ENCODE measurements at regions of chr11 and their contacts with region 1.

Region 1: GRCh38 chr11:95150946-95151684 is 61.5 kb downstream of the ENDOD1 start:
- DNase-seq: peak; percentile 92
- ATAC-seq: peak; percentile 76
- H3K4me3 ChIP-seq: peak overlapping the region; percentile 63 to 66
- H3K27ac ChIP-seq: peak overlapping the region; percentile 90
- H3K4me1 ChIP-seq: peaks cover 32 to 55% of the 10 kb centered on the region in 2 experiments
- H3K27me3 ChIP-seq: no peaks in the 10 kb centered on the region
- CTCF ChIP-seq: peak; percentile 56 to 97 (median 76)
- POLR2A ChIP-seq: peak; percentile 47
- RAD21 ChIP-seq: peak; percentile 92

Region 2: DNA sequence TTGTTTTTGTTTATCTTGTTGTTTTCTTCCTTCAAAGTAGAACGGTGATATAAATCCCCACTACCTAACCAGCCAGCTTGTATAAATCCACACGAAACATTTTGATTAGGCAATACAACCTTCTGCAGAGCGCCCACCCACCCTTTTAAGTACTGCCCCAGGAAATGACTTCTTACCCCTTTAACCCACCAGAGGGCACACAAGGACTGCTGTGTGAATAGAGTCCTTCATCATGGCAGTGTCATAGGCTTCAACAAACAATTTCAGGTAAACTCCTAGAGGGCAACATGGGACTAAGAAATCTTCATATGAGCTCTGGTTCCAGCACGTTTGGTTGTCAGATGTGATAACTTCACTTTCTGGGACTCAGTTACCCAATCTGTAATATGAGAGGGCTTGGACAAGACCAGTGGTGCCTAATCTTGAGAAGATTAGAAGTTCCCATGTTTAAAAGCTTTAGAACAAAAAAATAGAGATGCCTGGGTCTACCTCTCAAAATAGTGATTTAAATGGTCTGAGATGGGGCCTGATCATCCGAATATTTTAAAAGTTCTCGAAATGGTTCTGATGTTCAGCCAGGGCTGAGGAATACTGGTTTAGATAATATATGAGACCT is 527.9 kb before region 1 on chr11:
- CTCF ChIA-PET with region 1: interaction called, 11 read pairs
- POLR2A ChIA-PET with region 1: no interaction called
- RAD21 ChIA-PET with region 1: no interaction called
- intact Hi-C with region 1: loop called (anchors 1 kb)
- DNase-seq: peak; percentile 88
- ATAC-seq: peak; percentile 99
- H3K4me3 ChIP-seq: no peak overlapping the region
- H3K27ac ChIP-seq: no peak overlapping the region
- H3K4me1 ChIP-seq: no peaks in the 10 kb centered on the region
- H3K27me3 ChIP-seq: no peaks in the 10 kb centered on the region
- CTCF ChIP-seq: peak; percentile 71 to 99 (median 90)
- POLR2A ChIP-seq: no peak
- RAD21 ChIP-seq: peak; percentile 99

Region 3: DNA sequence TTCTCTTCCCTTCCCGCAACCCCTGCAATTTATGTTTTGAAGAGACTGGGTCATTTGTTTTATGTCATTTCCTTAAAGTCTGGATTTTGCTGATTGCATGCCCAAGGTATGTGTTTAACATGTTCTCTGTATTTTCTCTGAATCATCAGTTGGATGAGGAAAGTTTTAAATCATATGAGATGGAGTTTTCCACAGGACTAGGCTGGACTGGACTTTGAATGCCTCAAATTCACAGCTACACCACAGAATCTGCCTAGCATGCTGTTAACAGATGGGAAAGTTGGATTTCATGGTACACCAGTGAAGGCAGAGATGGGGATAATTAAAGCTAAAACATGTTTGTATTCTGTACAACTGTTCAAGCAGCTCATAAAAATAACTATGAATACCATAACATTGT is 240.3 kb before region 1 on chr11:
- CTCF ChIA-PET with region 1: no interaction called
- POLR2A ChIA-PET with region 1: no interaction called
- RAD21 ChIA-PET with region 1: no interaction called
- intact Hi-C with region 1: no loop called
- DNase-seq: no peak
- ATAC-seq: no peak
- H3K4me3 ChIP-seq: no peak overlapping the region
- H3K27ac ChIP-seq: no peak overlapping the region
- H3K4me1 ChIP-seq: peaks cover 0 to 8% of the 10 kb centered on the region in 2 experiments; a peak in 1 of 4 replicates
- H3K27me3 ChIP-seq: no peaks in the 10 kb centered on the region
- CTCF ChIP-seq: no peak
- POLR2A ChIP-seq: no peak
- RAD21 ChIP-seq: no peak

Region 4: DNA sequence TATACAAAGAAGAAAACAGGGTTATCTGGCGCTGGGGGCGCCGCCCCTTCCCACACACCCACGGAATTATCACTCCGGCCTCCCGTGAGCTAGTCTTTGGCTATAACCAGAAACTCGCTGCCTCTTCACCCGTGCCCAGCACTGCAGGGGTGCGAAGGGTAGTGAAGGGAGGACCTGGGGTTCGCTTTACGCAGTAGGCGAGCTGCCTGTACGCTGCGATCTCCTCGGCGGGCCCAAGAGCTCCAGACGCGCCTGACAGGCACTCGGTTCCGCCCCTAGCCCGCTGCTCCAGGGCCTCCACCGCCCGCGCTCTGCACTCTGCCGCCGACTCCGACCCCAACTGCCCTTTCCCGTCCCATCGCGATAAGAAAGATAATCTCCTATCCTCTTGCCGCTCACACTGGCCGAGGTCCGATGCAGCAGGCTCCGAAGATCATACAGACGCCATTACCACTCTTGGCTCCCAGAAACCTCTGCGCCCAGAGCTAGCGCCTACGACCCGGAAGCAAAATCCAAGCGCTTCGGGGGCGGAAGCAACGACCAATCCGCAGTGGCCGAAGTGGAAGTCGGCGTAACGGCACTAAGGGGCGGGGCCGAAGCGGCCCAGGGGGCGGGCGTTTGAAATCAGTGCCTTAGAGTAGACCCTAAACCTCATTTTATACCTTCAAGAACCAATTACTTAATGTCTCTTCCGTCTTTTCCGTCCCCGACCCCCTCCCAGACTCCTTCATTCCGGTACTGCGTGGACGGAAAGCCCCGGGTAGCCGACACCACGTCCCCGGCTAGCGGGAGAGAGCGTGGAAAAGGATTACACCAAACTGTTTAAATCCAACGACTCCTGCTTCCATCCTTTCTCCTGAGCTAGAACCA is 177.8 kb before region 1 on chr11 and contains the starts of genes CWC15 and KDM4D:
- CTCF ChIA-PET with region 1: interaction called, 4 read pairs
- POLR2A ChIA-PET with region 1: no interaction called
- RAD21 ChIA-PET with region 1: no interaction called
- intact Hi-C with region 1: loop called (anchors 2 kb)
- DNase-seq: peak; percentile 84
- ATAC-seq: peak; percentile 99
- H3K4me3 ChIP-seq: peak within 1 kb of the TSS; percentile 75 to 82
- H3K27ac ChIP-seq: peak within 1 kb of the TSS; percentile 51
- H3K4me1 ChIP-seq: peaks cover 7 to 14% of the 10 kb centered on the region in 2 experiments; a peak in 3 of 4 replicates
- H3K27me3 ChIP-seq: no peaks in the 10 kb centered on the region
- CTCF ChIP-seq: no peak
- POLR2A ChIP-seq: peak; percentile 88
- RAD21 ChIP-seq: no peak
- total RNA-seq, gene CWC15: 47.6 TPM
- total RNA-seq, gene KDM4D: 2.1 TPM

Region 5: DNA sequence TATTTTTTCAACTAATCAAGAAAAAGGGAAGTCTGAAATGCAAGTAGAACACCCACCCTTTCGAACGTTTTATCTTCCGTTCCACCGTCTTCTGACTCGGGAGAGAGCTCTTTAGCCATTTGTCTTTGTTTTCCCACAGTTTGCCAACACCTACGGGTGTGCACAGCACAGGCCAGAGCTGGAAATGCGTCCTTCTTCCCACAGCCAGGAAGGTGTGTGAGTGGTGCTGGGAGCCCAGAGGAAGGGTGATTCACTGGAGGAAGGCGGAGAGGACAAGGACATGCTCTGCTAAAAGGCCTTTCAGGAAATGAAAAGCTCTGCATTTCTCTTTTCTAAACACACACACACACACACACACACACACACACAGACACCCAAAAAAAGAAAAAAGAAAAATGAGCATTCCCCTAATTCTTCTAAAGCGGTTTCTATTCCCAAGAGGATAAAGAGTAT is 42.9 kb before region 1 on chr11:
- CTCF ChIA-PET with region 1: interaction called, 5 read pairs
- POLR2A ChIA-PET with region 1: interaction called, 5 read pairs
- RAD21 ChIA-PET with region 1: interaction called in 1 of 2 experiments, 3 read pairs
- intact Hi-C with region 1: loop called (anchors 1 kb)
- DNase-seq: no peak
- ATAC-seq: peak; percentile 74
- H3K4me3 ChIP-seq: peak overlapping the region; percentile 43 to 55
- H3K27ac ChIP-seq: peak overlapping the region; percentile 89
- H3K4me1 ChIP-seq: peaks cover 64 to 87% of the 10 kb centered on the region in 2 experiments
- H3K27me3 ChIP-seq: no peaks in the 10 kb centered on the region
- CTCF ChIP-seq: no peak
- POLR2A ChIP-seq: no peak
- RAD21 ChIP-seq: no peak

Region 6: GRCh38 chr11:95764267-95764898 is 613.3 kb after region 1 on chr11:
- CTCF ChIA-PET with region 1: interaction called, 83 read pairs
- POLR2A ChIA-PET with region 1: interaction called, 3 read pairs
- RAD21 ChIA-PET with region 1: interaction called in 1 of 2 experiments, 4 read pairs
- intact Hi-C with region 1: loop called (anchors 1 kb)
- DNase-seq: peak; percentile 27
- ATAC-seq: peak; percentile 72; the same call in 1 of the 2 replicates
- H3K4me3 ChIP-seq: no peak overlapping the region
- H3K27ac ChIP-seq: no peak overlapping the region
- H3K4me1 ChIP-seq: no peaks in the 10 kb centered on the region
- H3K27me3 ChIP-seq: no peaks in the 10 kb centered on the region
- CTCF ChIP-seq: peak; percentile 42 to 79 (median 66); a peak in 5 of 6 replicates
- POLR2A ChIP-seq: no peak
- RAD21 ChIP-seq: peak; percentile 81

Region 7: GRCh38 chr11:95923728-95924413 is 772.8 kb after region 1 on chr11 and contains the start of gene MTMR2:
- CTCF ChIA-PET with region 1: no interaction called
- POLR2A ChIA-PET with region 1: no interaction called
- RAD21 ChIA-PET with region 1: interaction called in 1 of 2 experiments, 4 read pairs
- intact Hi-C with region 1: loop called (anchors 10 kb)
- DNase-seq: peak; percentile 31
- ATAC-seq: peak; percentile 96
- H3K4me3 ChIP-seq: peak within 1 kb of the TSS; percentile 69 to 94
- H3K27ac ChIP-seq: peak within 1 kb of the TSS; percentile 79
- H3K4me1 ChIP-seq: peaks cover 6 to 14% of the 10 kb centered on the region in 2 experiments
- H3K27me3 ChIP-seq: no peaks in the 10 kb centered on the region
- CTCF ChIP-seq: no peak
- POLR2A ChIP-seq: peak; percentile 97
- RAD21 ChIP-seq: no peak
- total RNA-seq, gene MTMR2: 29.1 TPM